Aorta (tissue), 5 donors: ENCODE measurements at regions of chr2 and their contacts with region 1.

Region 1: DNA sequence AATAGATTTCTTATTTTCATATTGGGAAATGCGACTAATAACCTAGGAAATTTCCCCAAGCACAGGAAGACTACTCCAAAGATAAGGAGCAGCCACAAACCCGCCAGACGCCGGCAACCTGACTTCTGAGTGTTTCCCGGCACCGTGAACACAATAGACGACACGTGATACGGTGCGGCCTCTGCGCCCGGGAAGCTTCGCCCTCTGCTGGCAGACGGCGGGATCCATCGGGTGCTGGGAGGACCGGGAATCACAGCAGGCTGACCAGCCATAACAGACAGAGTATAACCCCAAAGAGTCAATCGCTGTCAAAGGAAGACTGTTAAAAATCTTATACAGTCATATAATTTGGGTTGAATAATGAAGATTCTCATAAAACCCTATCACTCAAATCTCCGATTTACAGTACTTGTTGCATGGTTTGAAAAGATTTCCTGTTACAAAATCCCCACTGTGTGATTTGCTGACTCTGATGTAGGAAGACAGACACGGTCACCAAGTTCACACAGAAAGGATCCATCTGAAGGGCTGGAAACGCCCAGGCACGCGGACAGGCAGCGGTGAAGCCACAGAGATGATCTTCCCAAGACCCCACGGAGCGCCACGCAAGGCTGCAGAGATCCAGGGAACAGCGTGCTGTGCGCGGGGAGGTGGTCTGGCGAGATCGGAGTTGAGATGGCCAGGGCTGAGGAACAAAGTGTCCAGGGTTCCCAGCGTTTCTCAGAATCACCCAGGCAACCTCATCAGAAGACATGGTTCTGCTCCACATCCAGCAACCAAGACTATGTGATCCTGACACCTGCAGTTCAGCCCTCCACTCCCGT is 73.8 kb downstream of the EIPR1 start:
- DNase-seq: peak; percentile 89 to 94
- ATAC-seq: peak; percentile 95
- H3K4me3 ChIP-seq: no peak overlapping the region
- H3K27ac ChIP-seq: no peak overlapping the region
- H3K4me1 ChIP-seq: no peaks in the 10 kb centered on the region
- H3K27me3 ChIP-seq: no peaks in the 10 kb centered on the region

Region 2: GRCh38 chr2:1854729-1855547 is 1448.9 kb before region 1 on chr2:
- intact Hi-C with region 1: loop called in 1 of 2 experiments (anchors 10 kb)
- DNase-seq: no peak
- ATAC-seq: peak; percentile 67
- H3K4me3 ChIP-seq: no peak overlapping the region
- H3K27ac ChIP-seq: no peak overlapping the region
- H3K4me1 ChIP-seq: no peaks in the 10 kb centered on the region
- H3K27me3 ChIP-seq: no peaks in the 10 kb centered on the region

Region 3: GRCh38 chr2:3365219-3365618 is 61.4 kb after region 1 on chr2:
- intact Hi-C with region 1: no loop called
- DNase-seq: no peak
- ATAC-seq: no peak
- H3K4me3 ChIP-seq: no peak overlapping the region
- H3K27ac ChIP-seq: no peak overlapping the region
- H3K4me1 ChIP-seq: no peaks in the 10 kb centered on the region
- H3K27me3 ChIP-seq: no peaks in the 10 kb centered on the region